Dendritic cell treated with granulocyte-macrophage colony-stimulating factor and Interleukin-4, amounts not matched to agents 40 ng/mL and 50 ng/mL, for 4 days (primary cell): ENCODE measurements at regions of chr2 and their contacts with region 1.

Region 1: DNA sequence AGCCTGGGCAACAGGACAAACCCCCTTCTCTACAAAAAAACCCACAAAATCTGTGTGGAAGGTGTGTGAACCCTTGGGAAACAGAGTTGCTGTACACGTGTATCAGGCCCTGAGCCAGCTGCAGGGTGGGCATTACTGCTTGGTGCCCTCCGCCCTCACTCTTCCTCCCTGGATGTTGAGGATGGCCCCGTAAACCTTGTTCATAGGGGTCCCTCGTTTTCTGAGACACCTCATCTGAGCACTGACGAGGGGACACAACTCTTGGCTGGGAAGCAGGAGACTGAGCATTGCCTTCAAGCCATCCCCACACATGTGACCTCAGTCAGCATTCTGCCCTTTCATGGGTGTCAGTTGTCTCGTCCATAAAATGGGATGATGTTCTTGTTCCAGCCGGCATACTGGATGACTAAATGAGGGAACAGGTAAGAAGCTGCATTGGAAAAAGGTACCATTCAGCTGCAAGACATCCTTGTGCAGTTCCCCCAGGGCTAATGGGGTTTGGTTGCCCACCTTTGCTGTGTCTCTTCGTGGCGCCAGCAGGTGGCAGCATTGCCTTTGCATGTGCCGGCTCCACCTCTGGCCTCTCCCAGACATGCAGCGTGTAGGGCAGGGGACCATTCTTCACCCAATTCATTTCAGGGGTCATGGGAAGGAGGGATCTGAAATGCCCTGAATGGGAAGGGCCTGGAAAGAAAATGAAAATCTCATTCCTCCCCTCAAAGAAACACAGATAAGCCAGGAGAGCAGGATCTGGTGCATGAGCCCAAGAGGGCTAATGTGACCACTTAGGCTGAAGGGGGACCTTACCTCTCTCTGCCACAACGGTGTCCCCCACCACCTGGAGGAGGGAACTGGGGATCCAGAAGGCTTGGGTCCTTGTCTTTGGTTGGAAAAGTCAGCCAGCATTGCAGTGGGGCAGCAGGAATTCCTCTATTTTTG is 36.4 kb upstream of the HAAO start:
- H3K4me3 Mint-ChIP-seq: no peak overlapping the region
- H3K27ac Mint-ChIP-seq: no peak overlapping the region
- H3K4me1 Mint-ChIP-seq: peaks cover 22% of the 10 kb centered on the region
- H3K27me3 Mint-ChIP-seq: peaks cover 16% of the 10 kb centered on the region

Region 2: GRCh38 chr2:42725657-42726056 is 103.1 kb before region 1 on chr2:
- intact Hi-C with region 1: no loop called
- H3K4me3 Mint-ChIP-seq: no peak overlapping the region
- H3K27ac Mint-ChIP-seq: peak overlapping the region; percentile 68
- H3K4me1 Mint-ChIP-seq: peaks cover 34% of the 10 kb centered on the region
- H3K27me3 Mint-ChIP-seq: peaks cover 1% of the 10 kb centered on the region

Region 3: GRCh38 chr2:43542285-43542937 is 713.7 kb after region 1 on chr2:
- intact Hi-C with region 1: loop called (anchors 5 kb)
- H3K4me3 Mint-ChIP-seq: no peak overlapping the region
- H3K27ac Mint-ChIP-seq: no peak overlapping the region
- H3K4me1 Mint-ChIP-seq: peaks cover 15% of the 10 kb centered on the region
- H3K27me3 Mint-ChIP-seq: no peaks in the 10 kb centered on the region

Region 4: DNA sequence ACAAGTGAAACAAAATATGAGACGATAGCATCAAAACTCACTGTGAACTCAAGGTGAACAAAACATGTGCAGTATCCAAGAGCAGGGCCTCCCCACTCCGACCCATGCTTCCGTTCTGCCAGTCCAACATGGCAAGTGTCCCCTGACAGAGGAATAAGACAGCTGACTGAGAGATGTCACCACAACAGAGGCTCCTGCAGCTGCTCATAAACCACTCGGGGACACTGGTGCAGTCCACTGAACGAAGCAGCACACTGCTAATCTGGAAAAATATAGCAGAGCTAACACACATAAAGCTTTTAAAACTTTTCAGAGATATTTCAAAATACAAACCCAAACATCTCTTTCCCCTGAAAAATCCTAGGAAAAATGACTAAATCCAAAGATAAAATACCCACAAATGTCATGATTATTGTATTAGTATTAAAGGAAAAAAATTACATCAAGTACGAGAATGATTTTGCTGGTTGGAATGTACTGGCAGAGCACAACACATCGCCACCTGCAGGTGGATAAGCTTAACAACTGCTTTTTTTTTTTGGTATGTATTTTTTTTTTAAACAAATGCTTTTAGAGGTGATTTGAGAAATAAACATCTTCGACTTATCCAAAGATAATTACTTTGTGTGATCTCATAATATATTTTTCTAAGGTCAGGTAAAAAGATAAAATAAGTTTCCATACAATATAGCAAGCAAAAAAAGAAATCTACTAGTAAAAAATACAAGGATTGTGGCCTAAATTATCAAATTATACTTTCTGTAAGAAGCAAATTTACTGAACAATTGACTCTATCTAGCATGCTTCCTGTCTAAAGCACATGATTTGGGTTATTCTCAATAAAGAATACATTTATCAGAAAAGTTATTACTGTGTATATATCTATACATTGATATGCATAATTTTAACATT is 748.5 kb after region 1 on chr2:
- intact Hi-C with region 1: loop called (anchors 10 kb)
- H3K4me3 Mint-ChIP-seq: no peak overlapping the region
- H3K27ac Mint-ChIP-seq: no peak overlapping the region
- H3K4me1 Mint-ChIP-seq: no peaks in the 10 kb centered on the region
- H3K27me3 Mint-ChIP-seq: no peaks in the 10 kb centered on the region

Region 5: DNA sequence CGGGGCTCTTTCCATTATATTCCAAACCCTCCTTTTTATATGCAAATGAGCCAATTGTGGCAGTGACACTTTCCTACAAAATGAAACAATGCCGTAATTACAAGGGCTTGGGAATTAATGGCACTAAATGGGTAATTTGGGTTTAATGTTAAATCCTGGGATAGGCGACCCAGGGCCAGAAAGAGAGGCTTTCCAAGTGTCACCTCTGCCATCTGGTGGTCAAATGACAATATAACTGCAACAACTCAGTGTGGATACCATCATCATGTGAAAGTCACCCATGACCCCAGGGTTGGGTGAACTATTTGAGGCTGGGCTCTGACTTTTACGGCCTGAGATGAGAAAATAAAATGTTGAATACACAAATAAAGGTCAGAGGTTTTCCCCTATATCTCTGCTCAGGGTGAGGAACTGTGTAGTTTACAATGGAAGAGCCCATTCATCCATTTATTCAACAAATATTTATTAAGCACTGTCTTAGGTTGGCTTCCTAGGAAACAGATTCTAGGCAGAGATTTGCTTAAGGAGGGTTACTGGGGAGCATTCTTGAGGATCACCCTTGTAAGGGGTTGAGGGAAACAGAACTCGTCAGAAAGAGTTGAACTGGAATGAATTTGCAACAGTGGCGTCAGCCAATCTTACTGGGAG is 780.7 kb after region 1 on chr2:
- intact Hi-C with region 1: loop called (anchors 2 kb)
- H3K4me3 Mint-ChIP-seq: no peak overlapping the region
- H3K27ac Mint-ChIP-seq: no peak overlapping the region
- H3K4me1 Mint-ChIP-seq: peaks cover 12% of the 10 kb centered on the region
- H3K27me3 Mint-ChIP-seq: peaks cover 3% of the 10 kb centered on the region